ENCODE measurements at regions of chr3 and their contacts with region 1.

Region 1: GRCh38 chr3:2765002-2765579 is 345.1 kb downstream of the IL5RA start:
- DNase-seq: peak; percentile 12
- ATAC-seq: peak; percentile 64
- H3K4me3 Mint-ChIP-seq: no peak overlapping the region
- H3K27ac Mint-ChIP-seq: no peak overlapping the region
- H3K4me1 Mint-ChIP-seq: peaks cover 3% of the 10 kb centered on the region
- H3K27me3 Mint-ChIP-seq: peaks cover 10% of the 10 kb centered on the region

Region 2: GRCh38 chr3:2921903-2922302 is 156.8 kb after region 1 on chr3:
- CTCF ChIA-PET with region 1: interaction called, 3 read pairs
- POLR2A ChIA-PET with region 1: no interaction called
- intact Hi-C with region 1: loop called (anchors 5 to 10 kb)
- DNase-seq: no peak
- ATAC-seq: no peak
- H3K4me3 Mint-ChIP-seq: no peak overlapping the region
- H3K27ac Mint-ChIP-seq: no peak overlapping the region
- H3K4me1 Mint-ChIP-seq: no peaks in the 10 kb centered on the region
- H3K27me3 Mint-ChIP-seq: peaks cover 4% of the 10 kb centered on the region

Measured in activated CD4-positive, alpha-beta T cell treated with anti-CD3 and anti-CD28 coated beads for 36 hours (primary cell).